ENCODE measurements at regions of chrX and their contacts with region 1.

Region 1: DNA sequence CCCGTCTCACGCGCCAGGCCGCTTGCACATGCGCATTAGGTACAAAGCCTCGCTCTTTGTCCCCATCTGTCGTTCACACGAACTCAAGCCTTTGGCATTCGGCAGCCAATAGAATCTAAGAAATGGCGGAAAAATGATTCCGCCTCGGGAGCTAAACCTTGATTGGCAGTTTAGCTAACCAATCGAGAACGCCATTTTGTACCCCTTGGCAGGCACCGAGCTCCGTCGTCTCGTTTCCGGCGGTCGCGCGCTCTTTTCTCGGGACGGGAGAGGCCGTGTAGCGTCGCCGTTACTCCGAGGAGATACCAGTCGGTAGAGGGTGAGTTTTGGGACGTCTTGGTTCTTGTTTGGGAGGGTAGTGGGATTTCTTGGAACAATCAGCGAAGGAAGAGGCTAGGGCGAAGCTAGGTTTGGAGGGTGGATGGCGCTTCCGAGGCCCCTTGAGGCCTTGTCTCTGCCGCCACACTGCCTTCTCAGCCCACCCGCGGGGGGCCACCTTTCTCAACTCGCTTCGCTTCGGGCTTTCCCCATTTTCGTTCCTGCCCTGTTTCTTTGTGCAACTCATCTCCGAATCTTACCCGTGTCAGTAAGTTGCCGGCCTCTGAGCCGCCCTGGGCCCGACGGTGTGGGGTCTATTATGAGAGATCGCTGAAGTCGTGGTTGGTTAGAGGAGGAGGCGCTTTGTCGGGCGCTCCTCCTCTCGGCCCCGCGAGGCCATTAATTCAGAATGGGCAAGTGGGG is at the start of gene NONO:
- DNase-seq: peak; percentile 96
- H3K4me3 ChIP-seq: peak within 1 kb of the TSS; percentile 62 to 96 (median 92)
- H3K27ac ChIP-seq: peak within 1 kb of the TSS; percentile 97
- H3K4me1 ChIP-seq: peaks cover 13% of the 10 kb centered on the region
- H3K27me3 ChIP-seq: no peaks in the 10 kb centered on the region
- CTCF ChIP-seq: peak; percentile 2 to 13
- POLR2A ChIP-seq: peak; percentile 71
- total RNA-seq, gene NONO: 465 and 466 TPM in 2 replicates

Region 2: GRCh38 chrX:71254092-71254941 is 29.3 kb before region 1 on chrX and contains the start of gene ZMYM3:
- CTCF ChIA-PET with region 1: interaction called, 6 read pairs
- POLR2A ChIA-PET with region 1: interaction called, 6 read pairs
- dilution Hi-C with region 1: no loop called
- intact Hi-C with region 1: loop called (anchors 1 kb)
- DNase-seq: peak; percentile 80
- H3K4me3 ChIP-seq: peak within 1 kb of the TSS; percentile 80 to 96 (median 94)
- H3K27ac ChIP-seq: peak within 1 kb of the TSS; percentile 51
- H3K4me1 ChIP-seq: peaks cover 8% of the 10 kb centered on the region
- H3K27me3 ChIP-seq: no peaks in the 10 kb centered on the region
- CTCF ChIP-seq: no peak
- POLR2A ChIP-seq: peak; percentile 24
- total RNA-seq, gene ZMYM3: 32.9 and 33.1 TPM in 2 replicates

Region 3: DNA sequence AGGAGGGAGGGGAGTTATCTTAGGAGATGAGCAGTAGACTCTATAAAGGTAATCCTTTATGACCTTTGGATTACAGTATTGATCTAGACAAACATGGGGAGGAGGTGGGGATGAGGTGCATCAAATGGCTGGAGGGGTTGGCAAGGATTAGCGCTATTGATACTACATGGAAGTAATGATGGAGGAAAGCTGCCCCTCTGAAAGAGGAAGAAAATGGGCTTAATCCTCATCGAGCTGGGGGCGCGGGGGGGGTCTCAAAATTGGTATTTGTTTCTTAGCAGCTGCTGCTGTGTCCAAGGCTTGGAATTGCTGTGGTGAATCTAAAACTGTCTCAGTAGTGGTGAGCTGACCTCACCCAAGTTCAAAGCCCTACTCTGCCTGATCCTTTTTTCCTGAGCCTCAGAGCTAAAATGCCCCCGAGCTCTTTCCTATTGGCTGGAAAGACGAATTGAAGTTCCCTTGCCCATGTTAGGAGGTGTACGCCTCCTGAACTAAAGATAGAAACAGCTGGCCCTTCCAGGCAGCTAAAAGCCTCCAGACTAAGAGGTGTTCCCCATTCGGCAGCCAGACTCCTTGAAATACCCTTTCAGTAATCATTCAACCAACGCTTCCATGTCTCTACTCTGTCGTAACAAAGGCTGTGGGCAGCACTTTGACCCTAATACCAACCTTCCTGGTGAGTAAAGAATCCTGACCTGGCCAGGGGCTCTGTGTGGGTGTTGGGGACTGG is 17.8 kb after region 1 on chrX and contains the start of gene ITGB1BP2:
- CTCF ChIA-PET with region 1: no interaction called
- POLR2A ChIA-PET with region 1: interaction called, 10 read pairs
- dilution Hi-C with region 1: no loop called
- intact Hi-C with region 1: no loop called
- DNase-seq: peak; percentile 1
- H3K4me3 ChIP-seq: no peak within 1 kb of the TSS
- H3K27ac ChIP-seq: peak within 1 kb of the TSS; percentile 37
- H3K4me1 ChIP-seq: peaks cover 26% of the 10 kb centered on the region
- H3K27me3 ChIP-seq: no peaks in the 10 kb centered on the region
- CTCF ChIP-seq: no peak
- POLR2A ChIP-seq: no peak
- total RNA-seq, gene ITGB1BP2: 4.6 and 5.9 TPM in 2 replicates

Region 4: DNA sequence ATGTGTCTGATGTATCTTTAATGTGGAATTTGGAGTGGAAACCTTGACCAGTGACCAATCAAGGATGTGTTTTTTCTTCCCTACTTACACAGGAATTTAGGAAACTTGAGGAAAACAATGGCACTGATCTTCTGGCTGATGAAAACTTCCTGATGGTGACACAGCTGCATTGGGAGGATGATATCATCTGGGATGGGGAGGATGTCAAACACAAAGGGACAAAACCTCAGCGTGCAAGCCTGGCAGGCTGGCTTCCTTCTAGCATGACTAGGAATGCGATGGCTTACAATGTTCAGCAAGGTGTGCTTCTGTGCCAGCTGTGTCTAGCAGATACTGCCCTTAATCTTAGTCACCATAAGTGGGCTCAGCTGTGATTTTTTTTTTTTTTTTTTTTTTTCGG is 95.2 kb after region 1 on chrX:
- CTCF ChIA-PET with region 1: no interaction called
- POLR2A ChIA-PET with region 1: no interaction called
- dilution Hi-C with region 1: no loop called
- intact Hi-C with region 1: no loop called
- DNase-seq: peak; percentile 68
- H3K4me3 ChIP-seq: no peak overlapping the region
- H3K27ac ChIP-seq: peak overlapping the region; percentile 95
- H3K4me1 ChIP-seq: peaks cover 10% of the 10 kb centered on the region
- H3K27me3 ChIP-seq: no peaks in the 10 kb centered on the region
- CTCF ChIP-seq: no peak
- POLR2A ChIP-seq: no peak

Measured in endothelial cell of umbilical vein (primary cell).